ENCODE measurements at regions of chr3 and their contacts with region 1.

Region 1: DNA sequence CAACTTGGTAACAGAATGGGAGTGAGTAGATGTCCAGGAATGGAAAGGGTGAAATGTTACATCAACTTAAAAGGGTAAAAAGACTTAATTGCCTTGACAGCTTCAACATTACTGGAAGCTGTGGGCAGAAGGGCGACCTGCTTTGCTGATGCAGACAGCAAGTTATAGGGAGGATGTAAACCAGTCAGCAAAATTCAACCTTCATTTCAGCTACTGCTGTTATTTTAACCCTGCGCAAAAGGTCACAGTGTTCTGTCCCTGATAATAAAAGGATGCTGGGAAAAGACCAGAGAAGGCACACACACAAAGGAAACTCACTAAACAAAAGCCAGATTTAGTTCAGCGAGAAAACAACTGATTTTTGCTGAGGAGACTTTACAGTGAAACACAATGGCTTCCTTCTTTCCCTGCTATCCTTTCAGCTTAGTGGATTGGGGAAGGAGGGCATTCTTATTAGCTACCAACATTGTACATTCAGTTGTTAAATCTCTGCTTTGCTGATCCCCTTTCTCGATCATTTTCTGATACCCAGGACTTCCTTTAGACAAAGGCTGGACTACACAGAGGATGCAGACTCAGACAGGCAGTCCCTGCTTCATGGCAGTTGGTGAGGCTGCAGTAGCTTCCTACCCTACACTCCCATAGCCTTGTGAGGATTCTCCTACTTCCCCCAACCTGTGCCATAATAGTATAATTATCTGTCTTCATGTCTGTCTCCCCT is 62.0 kb downstream of the P3H2 start:
- DNase-seq: no peak
- H3K4me3 ChIP-seq: no peak overlapping the region
- CTCF ChIP-seq: no peak

Region 2: DNA sequence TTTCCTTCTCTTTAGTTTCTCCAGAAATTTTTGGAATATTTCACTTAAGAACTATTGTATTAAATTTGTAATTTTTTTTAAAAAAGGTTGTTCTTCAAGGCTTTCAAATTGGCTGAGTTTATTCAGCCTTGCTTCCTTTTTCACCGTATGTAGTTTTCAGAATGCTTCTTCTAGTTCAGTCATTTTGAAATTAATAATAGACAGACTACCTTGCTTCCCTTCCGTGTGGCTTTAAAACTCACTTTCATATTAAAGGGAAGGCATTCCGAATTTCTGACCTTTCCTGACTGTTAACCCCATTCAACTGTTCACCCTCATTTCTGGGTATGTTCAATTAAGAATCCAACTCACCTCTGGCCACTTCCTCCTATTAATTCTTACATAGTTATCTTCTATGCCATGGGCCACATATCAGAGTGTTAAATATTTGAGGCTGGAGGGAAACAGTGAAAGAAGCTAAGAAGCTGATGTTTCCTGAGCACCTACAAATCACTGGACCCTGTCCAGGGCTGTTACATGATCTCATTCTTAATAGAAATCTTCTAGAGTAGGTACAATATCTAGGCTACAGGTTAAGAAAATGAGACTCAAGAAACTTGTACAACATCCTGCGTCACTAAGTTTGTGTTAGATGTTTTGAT is 175.4 kb before region 1 on chr3:
- in situ Hi-C with region 1: no loop called
- DNase-seq: no peak
- H3K4me3 ChIP-seq: no peak overlapping the region
- CTCF ChIP-seq: no peak

Region 3: DNA sequence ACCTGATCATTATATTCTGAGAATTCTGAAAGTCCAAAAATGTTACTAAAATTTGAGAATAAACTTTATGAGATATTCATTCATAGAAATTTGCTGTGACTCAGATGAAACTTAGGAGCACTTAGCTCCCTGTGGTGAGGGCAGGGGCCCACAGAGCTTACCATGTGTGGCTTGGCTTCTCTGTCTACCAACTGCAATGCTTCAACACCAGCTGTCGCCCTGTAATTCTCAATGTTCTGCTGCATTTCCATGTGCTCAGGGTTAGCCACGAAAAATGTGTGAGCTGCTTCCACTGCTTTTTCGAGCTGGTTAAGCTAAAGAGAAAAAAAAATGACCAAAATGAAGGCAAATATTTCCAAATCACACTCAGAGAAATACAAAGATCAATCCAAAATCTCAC is 63.6 kb before region 1 on chr3:
- in situ Hi-C with region 1: loop called (anchors 5 kb)
- DNase-seq: peak; percentile 88
- H3K4me3 ChIP-seq: no peak overlapping the region
- CTCF ChIP-seq: no peak

Region 4: GRCh38 chr3:190017521-190018288 is 41.0 kb before region 1 on chr3:
- in situ Hi-C with region 1: no loop called
- DNase-seq: peak; percentile 72
- H3K4me3 ChIP-seq: no peak overlapping the region
- CTCF ChIP-seq: peak; percentile 52

Region 5: DNA sequence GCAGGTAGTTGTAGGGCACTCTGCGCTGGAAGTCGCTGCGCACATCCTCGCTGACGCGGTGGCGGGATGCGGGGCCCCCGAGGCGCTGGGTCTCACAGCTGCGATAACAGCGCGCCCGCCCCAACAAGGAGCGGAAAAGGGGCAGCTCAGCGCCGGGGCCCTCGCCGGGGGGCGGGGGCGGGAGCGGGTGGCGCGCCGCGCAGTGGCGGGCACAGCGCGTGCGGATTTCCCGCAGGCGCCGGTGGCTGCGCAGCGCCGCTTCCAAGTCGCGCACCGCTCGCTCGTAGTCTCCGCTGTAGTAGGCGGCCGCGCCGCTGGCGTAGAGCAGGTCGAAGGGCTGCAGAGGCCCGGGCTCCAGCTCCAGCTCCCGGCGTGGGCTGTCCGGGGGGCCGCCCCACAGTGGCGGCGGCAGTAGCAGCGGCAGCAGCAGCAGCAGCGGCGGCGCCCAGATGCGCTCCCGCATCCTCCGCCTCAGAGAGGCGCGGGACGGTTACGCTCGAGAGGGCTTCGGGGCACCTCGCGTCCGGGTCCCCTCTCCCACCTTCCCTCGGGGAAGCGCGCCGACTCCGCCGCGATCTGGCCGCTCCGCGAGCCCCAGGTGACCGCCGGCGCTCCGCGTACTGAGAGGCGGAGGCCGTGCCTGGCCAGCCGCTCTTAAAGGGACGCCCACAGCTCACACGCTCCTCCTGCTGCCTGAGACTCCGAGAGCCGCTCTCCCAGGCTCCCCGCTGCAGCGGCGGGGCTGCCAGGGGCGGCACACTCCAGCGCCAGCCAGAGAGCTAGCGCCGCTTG is 61.8 kb after region 1 on chr3 and contains the start of gene P3H2:
- in situ Hi-C with region 1: no loop called
- DNase-seq: peak; percentile 79
- H3K4me3 ChIP-seq: peak within 1 kb of the TSS; percentile 74
- CTCF ChIP-seq: no peak

Region 6: GRCh38 chr3:190131329-190131728 is 72.6 kb after region 1 on chr3:
- in situ Hi-C with region 1: no loop called
- DNase-seq: no peak
- H3K4me3 ChIP-seq: no peak overlapping the region
- CTCF ChIP-seq: no peak